CD4-positive, alpha-beta T cell (primary cell): ENCODE measurements at regions of chr17 and their contacts with region 1.

Region 1: GRCh38 chr17:58352014-58352842 is at the start of gene SUPT4H1:
- DNase-seq: peak; percentile 83 to 98 (median 90)
- ATAC-seq: peak; percentile 87
- H3K4me3 ChIP-seq: peak within 1 kb of the TSS; percentile 78
- H3K4me3 Mint-ChIP-seq: peak within 1 kb of the TSS; percentile 99
- H3K27ac ChIP-seq: peak within 1 kb of the TSS; percentile 82 to 85
- H3K27ac Mint-ChIP-seq: peak within 1 kb of the TSS; percentile 98
- H3K4me1 ChIP-seq: peaks cover 31% of the 10 kb centered on the region
- H3K4me1 Mint-ChIP-seq: peaks cover 56% of the 10 kb centered on the region
- H3K27me3 ChIP-seq: no peaks in the 10 kb centered on the region
- H3K27me3 Mint-ChIP-seq: no peaks in the 10 kb centered on the region
- CTCF ChIP-seq: no peak
- total RNA-seq, gene SUPT4H1: 46.5 to 47.0 TPM

Region 2: DNA sequence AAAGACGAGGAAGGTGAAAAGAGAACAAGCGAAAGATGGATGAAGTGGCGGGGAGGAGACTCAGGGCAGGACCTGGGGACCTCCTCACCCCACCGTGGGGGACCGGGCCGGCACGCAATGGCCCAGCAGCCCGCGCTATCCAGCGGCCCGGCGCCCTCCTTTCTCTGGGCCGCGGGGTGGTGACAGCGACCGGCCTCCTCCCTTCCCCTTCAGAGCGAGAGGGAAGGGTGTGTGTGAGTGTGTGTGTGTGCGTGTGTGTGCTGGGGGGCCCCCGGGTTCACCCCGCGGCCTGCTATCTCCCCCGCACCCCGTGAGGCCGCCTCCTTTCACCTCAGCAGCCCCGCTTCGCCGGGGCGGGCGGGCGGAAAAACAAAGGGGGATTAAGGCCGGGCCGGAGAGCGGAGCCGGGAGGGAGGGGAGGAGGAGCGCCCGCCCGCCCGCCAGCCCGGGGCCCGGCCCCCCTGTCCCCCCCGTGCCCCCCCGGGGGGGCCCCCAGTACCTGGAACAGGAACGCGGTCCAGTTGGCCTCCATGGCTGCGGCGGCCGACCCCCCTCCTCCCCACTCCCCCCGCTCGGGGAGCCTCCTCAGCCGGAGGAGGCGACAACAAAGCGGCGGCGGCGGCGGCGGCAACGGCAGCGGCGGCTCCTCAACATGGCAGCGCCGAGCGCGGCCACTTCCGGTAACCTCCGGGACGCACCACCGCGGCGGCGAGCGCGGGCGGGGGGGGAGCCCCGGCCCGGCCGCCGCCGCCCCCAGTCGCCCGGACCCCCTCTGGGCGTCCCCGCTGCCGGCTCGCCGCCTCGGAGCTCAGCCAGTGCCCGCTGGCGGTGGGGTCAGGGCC is 364.4 kb before region 1 on chr17 and contains the start of gene VEZF1:
- CTCF ChIA-PET with region 1: no interaction called
- POLR2A ChIA-PET with region 1: no interaction called
- intact Hi-C with region 1: loop called in 1 of 2 experiments (anchors 5 kb)
- DNase-seq: peak; percentile 67 to 90 (median 78)
- ATAC-seq: peak; percentile 75
- H3K4me3 ChIP-seq: peak within 1 kb of the TSS; percentile 86
- H3K4me3 Mint-ChIP-seq: peak within 1 kb of the TSS; percentile 97
- H3K27ac ChIP-seq: peak within 1 kb of the TSS; percentile 50 to 74
- H3K27ac Mint-ChIP-seq: peak within 1 kb of the TSS; percentile 97
- H3K4me1 ChIP-seq: peaks cover 24% of the 10 kb centered on the region
- H3K4me1 Mint-ChIP-seq: peaks cover 70% of the 10 kb centered on the region
- H3K27me3 ChIP-seq: no peaks in the 10 kb centered on the region
- H3K27me3 Mint-ChIP-seq: no peaks in the 10 kb centered on the region
- CTCF ChIP-seq: no peak
- total RNA-seq, gene VEZF1: 41.6 to 41.7 TPM

Region 3: DNA sequence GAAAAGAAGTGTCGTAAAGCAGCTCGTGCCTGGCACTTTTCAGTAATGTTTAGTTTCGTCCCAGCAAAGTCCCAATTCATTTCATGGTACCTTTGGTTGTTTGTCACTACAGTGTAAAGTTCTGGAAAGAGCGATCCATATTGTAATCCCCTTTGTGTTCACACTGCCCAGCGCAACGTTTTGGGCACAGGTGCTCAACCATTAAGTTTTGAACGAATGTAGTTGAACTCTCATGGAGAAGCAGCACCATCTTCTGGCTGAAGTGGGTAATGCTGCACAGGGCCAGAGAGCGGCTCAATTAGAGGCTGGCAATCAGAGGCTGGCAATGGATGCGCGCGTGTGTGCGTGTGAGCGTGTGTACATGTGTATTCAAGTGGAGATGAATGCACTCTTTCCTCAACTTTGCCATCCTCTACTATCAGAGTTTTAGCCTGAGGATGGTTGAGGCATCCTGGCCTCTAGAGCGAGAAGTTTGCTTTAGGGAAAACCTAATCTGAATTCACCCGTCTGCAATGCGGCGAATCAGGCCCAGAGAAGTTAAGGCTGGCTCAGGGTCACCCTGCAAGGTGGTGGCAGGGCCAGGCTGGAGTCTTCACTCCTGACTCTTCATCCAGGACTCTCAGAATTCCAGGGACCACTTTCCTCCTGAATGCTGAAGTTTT is 239.1 kb before region 1 on chr17:
- CTCF ChIA-PET with region 1: no interaction called
- POLR2A ChIA-PET with region 1: no interaction called
- intact Hi-C with region 1: no loop called
- DNase-seq: peak; percentile 73 to 89 (median 86)
- ATAC-seq: peak; percentile 99
- H3K4me3 ChIP-seq: no peak overlapping the region
- H3K4me3 Mint-ChIP-seq: no peak overlapping the region
- H3K27ac ChIP-seq: no peak overlapping the region
- H3K27ac Mint-ChIP-seq: no peak overlapping the region
- H3K4me1 ChIP-seq: no peaks in the 10 kb centered on the region
- H3K4me1 Mint-ChIP-seq: no peaks in the 10 kb centered on the region
- H3K27me3 ChIP-seq: no peaks in the 10 kb centered on the region
- H3K27me3 Mint-ChIP-seq: peaks cover 4% of the 10 kb centered on the region
- CTCF ChIP-seq: peak; percentile 89

Region 4: GRCh38 chr17:58329035-58329809 is 23.0 kb before region 1 on chr17:
- CTCF ChIA-PET with region 1: interaction called, 7 read pairs
- POLR2A ChIA-PET with region 1: interaction called, 1,359 read pairs
- intact Hi-C with region 1: no loop called
- DNase-seq: peak; percentile 47 to 87 (median 72)
- ATAC-seq: peak; percentile 39
- H3K4me3 ChIP-seq: peak overlapping the region; percentile 84
- H3K4me3 Mint-ChIP-seq: peak overlapping the region; percentile 90
- H3K27ac ChIP-seq: peak overlapping the region; percentile 84 to 87
- H3K27ac Mint-ChIP-seq: peak overlapping the region; percentile 84
- H3K4me1 ChIP-seq: peaks cover 62% of the 10 kb centered on the region
- H3K4me1 Mint-ChIP-seq: peaks cover 53% of the 10 kb centered on the region
- H3K27me3 ChIP-seq: no peaks in the 10 kb centered on the region
- H3K27me3 Mint-ChIP-seq: no peaks in the 10 kb centered on the region
- CTCF ChIP-seq: peak; percentile 83

Region 5: GRCh38 chr17:58337600-58338453 is 14.4 kb before region 1 on chr17:
- CTCF ChIA-PET with region 1: interaction called, 10 read pairs
- POLR2A ChIA-PET with region 1: interaction called, 1,359 read pairs
- intact Hi-C with region 1: loop called in 1 of 2 experiments (anchors 2 kb)
- DNase-seq: peak; percentile 78 to 96 (median 88)
- ATAC-seq: peak; percentile 73
- H3K4me3 ChIP-seq: peak overlapping the region; percentile 84
- H3K4me3 Mint-ChIP-seq: peak overlapping the region; percentile 90
- H3K27ac ChIP-seq: peak overlapping the region; percentile 97 to 98
- H3K27ac Mint-ChIP-seq: peak overlapping the region; percentile 84
- H3K4me1 ChIP-seq: peaks cover 96% of the 10 kb centered on the region
- H3K4me1 Mint-ChIP-seq: peaks cover 92% of the 10 kb centered on the region
- H3K27me3 ChIP-seq: no peaks in the 10 kb centered on the region
- H3K27me3 Mint-ChIP-seq: no peaks in the 10 kb centered on the region
- CTCF ChIP-seq: no peak

Region 6: GRCh38 chr17:58364270-58364942 is 12.2 kb after region 1 on chr17:
- CTCF ChIA-PET with region 1: no interaction called
- POLR2A ChIA-PET with region 1: interaction called, 17 read pairs
- intact Hi-C with region 1: no loop called
- DNase-seq: no peak
- ATAC-seq: no peak
- H3K4me3 ChIP-seq: no peak overlapping the region
- H3K4me3 Mint-ChIP-seq: no peak overlapping the region
- H3K27ac ChIP-seq: no peak overlapping the region
- H3K27ac Mint-ChIP-seq: no peak overlapping the region
- H3K4me1 ChIP-seq: no peaks in the 10 kb centered on the region
- H3K4me1 Mint-ChIP-seq: no peaks in the 10 kb centered on the region
- H3K27me3 ChIP-seq: no peaks in the 10 kb centered on the region
- H3K27me3 Mint-ChIP-seq: no peaks in the 10 kb centered on the region
- CTCF ChIP-seq: no peak

Region 7: GRCh38 chr17:58382108-58382871 is 30.1 kb after region 1 on chr17:
- CTCF ChIA-PET with region 1: no interaction called
- POLR2A ChIA-PET with region 1: interaction called, 12 read pairs
- intact Hi-C with region 1: no loop called
- DNase-seq: peak in 1 of 14 experiments; percentile 45
- ATAC-seq: no peak
- H3K4me3 ChIP-seq: no peak overlapping the region
- H3K4me3 Mint-ChIP-seq: peak overlapping the region; percentile 1
- H3K27ac ChIP-seq: no peak overlapping the region
- H3K27ac Mint-ChIP-seq: peak overlapping the region; percentile 53
- H3K4me1 ChIP-seq: peaks cover 30% of the 10 kb centered on the region
- H3K4me1 Mint-ChIP-seq: peaks cover 46% of the 10 kb centered on the region
- H3K27me3 ChIP-seq: no peaks in the 10 kb centered on the region
- H3K27me3 Mint-ChIP-seq: no peaks in the 10 kb centered on the region
- CTCF ChIP-seq: no peak